ENCODE measurements at regions of chr15 and their contacts with region 1.

Region 1: GRCh38 chr15:85485956-85486567 is 105.7 kb downstream of the AKAP13 start:
- DNase-seq: peak; percentile 90
- ATAC-seq: peak; percentile 84
- H3K4me3 ChIP-seq: no peak overlapping the region
- H3K27ac ChIP-seq: no peak overlapping the region
- H3K4me1 ChIP-seq: no peaks in the 10 kb centered on the region
- H3K27me3 ChIP-seq: no peaks in the 10 kb centered on the region
- CTCF ChIP-seq: peak; percentile 81

Region 2: DNA sequence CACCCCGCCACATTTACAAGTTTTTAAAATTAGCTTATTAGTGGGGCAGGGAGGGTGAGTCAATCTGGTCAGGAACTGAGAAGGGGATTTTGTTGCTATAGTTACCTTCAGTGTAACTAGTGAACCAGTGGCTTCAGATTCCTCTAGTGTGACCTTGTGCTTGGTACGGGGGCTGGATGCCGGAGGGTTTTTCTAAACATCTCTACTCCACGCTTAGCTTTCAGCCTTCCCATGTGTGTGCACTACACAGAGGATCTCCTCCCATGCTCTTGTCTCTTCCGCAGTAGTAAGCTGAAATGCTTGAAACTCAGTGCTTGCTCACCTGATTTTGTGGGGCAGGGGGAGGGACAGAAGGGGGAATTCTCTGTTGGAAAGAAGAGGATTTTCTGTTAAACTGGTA is 173.6 kb before region 1 on chr15:
- CTCF ChIA-PET with region 1: no interaction called
- POLR2A ChIA-PET with region 1: interaction called, 10 read pairs
- intact Hi-C with region 1: no loop called
- DNase-seq: no peak
- ATAC-seq: no peak
- H3K4me3 ChIP-seq: no peak overlapping the region
- H3K27ac ChIP-seq: no peak overlapping the region
- H3K4me1 ChIP-seq: peaks cover 8% of the 10 kb centered on the region
- H3K27me3 ChIP-seq: no peaks in the 10 kb centered on the region
- CTCF ChIP-seq: no peak

Region 3: GRCh38 chr15:85380217-85380811 is 105.7 kb before region 1 on chr15 and contains the start of gene AKAP13:
- CTCF ChIA-PET with region 1: no interaction called
- POLR2A ChIA-PET with region 1: interaction called, 19 read pairs
- intact Hi-C with region 1: no loop called
- DNase-seq: peak; percentile 99
- ATAC-seq: peak; percentile 88
- H3K4me3 ChIP-seq: peak within 1 kb of the TSS; percentile 78
- H3K27ac ChIP-seq: peak within 1 kb of the TSS; percentile 69
- H3K4me1 ChIP-seq: peaks cover 24% of the 10 kb centered on the region
- H3K27me3 ChIP-seq: no peaks in the 10 kb centered on the region
- CTCF ChIP-seq: no peak
- total RNA-seq, gene AKAP13: 36.8 and 46.8 TPM in 2 replicates

Region 4: DNA sequence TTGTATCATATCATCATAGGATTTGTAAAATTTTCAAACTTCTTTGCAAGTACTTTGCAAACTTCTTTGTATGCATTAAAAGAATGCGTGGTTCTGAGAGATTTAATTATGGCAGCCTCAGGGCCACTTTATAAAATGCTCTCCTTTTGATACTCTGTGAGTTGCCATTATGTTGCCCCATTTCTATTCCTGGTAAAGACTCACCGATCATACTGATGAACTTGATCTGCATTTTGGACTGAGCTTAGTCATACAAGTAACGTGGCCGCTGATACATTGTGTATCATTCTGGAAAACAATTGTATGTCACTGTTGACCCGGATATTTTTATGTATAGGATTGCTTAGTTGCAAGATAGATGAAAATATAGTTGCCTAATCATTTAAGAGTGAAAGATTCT is 66.9 kb before region 1 on chr15:
- CTCF ChIA-PET with region 1: interaction called, 3 read pairs
- POLR2A ChIA-PET with region 1: no interaction called
- intact Hi-C with region 1: loop called (anchors 5 kb)
- DNase-seq: peak; percentile 83
- ATAC-seq: peak; percentile 65
- H3K4me3 ChIP-seq: peak overlapping the region; percentile 45; the same call in 1 of the 2 replicates
- H3K27ac ChIP-seq: peak overlapping the region; percentile 86
- H3K4me1 ChIP-seq: peaks cover 48% of the 10 kb centered on the region
- H3K27me3 ChIP-seq: no peaks in the 10 kb centered on the region
- CTCF ChIP-seq: no peak

Region 5: DNA sequence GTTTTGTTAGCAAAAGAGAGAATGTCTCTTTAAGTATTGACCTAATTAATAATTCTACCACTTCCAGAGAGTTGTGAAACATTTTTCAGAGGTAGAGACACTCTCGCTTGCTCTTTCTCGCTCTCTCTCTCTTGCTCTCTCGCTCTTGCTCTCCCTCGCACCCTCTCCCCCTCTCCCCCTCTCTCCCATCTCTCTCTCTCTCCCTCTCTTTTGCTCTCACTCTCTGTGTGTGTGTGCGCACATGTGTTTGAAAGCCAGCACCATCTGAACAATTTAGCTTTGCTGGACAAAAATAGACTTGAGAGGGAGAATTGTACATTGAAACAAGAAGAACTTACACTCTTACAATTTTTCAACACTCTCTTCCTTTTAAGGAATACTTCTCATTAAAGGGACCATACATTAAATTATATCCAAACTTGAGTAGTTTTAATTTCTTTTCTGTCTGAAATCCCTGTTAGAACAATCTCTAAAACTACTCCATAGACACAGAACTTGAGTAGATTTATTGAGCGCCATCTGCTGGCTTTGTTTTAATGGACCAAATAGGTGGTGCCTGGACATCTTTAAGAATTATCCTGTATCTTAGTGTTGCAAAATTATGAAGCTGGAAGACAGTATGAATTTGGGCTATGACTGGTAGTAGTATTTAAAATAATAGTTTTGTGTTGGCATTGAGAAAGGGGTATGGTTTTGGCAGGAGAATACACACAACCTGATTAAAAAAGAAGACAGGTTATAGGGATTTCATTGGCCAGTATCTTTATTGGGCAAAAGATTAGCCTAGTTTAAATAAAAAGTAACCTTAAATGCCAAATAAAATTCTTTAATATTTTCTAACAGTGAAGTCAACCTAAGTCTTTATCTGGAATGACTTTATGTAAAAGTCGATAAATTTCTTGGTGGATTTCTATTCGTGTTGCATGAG is 19.0 kb after region 1 on chr15:
- CTCF ChIA-PET with region 1: interaction called, 7 read pairs
- POLR2A ChIA-PET with region 1: no interaction called
- intact Hi-C with region 1: loop called (anchors 1 kb)
- DNase-seq: peak; percentile 73
- ATAC-seq: peak; percentile 76
- H3K4me3 ChIP-seq: no peak overlapping the region
- H3K27ac ChIP-seq: no peak overlapping the region; the same call in 1 of the 2 replicates
- H3K4me1 ChIP-seq: peaks cover 9% of the 10 kb centered on the region; the same call in 1 of the 2 replicates
- H3K27me3 ChIP-seq: no peaks in the 10 kb centered on the region
- CTCF ChIP-seq: peak; percentile 82